Activated CD4-positive, alpha-beta T cell treated with anti-CD3 and anti-CD28 coated beads, Interleukin-2, amount 10 ng/mL, durations not matched to agents 24 days and 14 days (primary cell): ENCODE measurements at regions of chr10 and their contacts with region 1.

Region 1: GRCh38 chr10:98242823-98243222 is 25.2 kb downstream of the LOXL4 start:
- DNase-seq: no peak
- H3K4me3 Mint-ChIP-seq: no peak overlapping the region
- H3K27ac Mint-ChIP-seq: no peak overlapping the region
- H3K4me1 Mint-ChIP-seq: no peaks in the 10 kb centered on the region
- H3K27me3 Mint-ChIP-seq: no peaks in the 10 kb centered on the region

Region 2: GRCh38 chr10:98170249-98171117 is 72.3 kb before region 1 on chr10:
- intact Hi-C with region 1: loop called (anchors 10 kb)
- DNase-seq: peak; percentile 76
- H3K4me3 Mint-ChIP-seq: no peak overlapping the region
- H3K27ac Mint-ChIP-seq: no peak overlapping the region
- H3K4me1 Mint-ChIP-seq: peaks cover 5% of the 10 kb centered on the region
- H3K27me3 Mint-ChIP-seq: no peaks in the 10 kb centered on the region

Region 3: DNA sequence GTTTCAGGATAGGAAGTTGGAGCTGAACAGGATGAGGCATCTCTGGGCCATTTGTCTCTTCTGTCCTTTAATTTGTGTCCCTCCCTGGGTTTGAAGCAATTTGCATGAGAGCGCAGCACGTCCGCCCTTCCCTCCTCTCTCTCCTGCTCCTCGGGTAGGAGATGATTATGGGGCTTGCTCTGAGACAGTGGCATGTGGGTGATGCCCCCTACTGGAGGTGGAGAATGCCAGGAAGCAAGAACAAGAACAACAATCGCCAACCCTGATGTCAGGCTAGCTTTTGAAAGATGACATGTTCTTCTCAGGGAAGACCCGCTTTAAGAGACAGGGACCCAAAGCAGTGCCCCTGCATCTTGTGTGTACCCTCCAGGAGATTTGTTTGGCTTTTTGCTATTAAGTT is 89.1 kb after region 1 on chr10:
- intact Hi-C with region 1: no loop called
- DNase-seq: peak; percentile 57
- H3K4me3 Mint-ChIP-seq: no peak overlapping the region
- H3K27ac Mint-ChIP-seq: no peak overlapping the region
- H3K4me1 Mint-ChIP-seq: no peaks in the 10 kb centered on the region
- H3K27me3 Mint-ChIP-seq: peaks cover 7% of the 10 kb centered on the region